Aorta (tissue), 5 donors: ENCODE measurements at regions of chr14 and their contacts with region 1.

Region 1: GRCh38 chr14:81269100-81269978 is 48.6 kb upstream of the GTF2A1 start:
- DNase-seq: no peak
- ATAC-seq: peak; percentile 84
- H3K4me3 ChIP-seq: no peak overlapping the region
- H3K27ac ChIP-seq: no peak overlapping the region
- H3K4me1 ChIP-seq: no peaks in the 10 kb centered on the region
- H3K27me3 ChIP-seq: no peaks in the 10 kb centered on the region

Region 2: GRCh38 chr14:81187832-81188522 is 81.4 kb before region 1 on chr14:
- intact Hi-C with region 1: no loop called
- DNase-seq: no peak
- ATAC-seq: no peak
- H3K4me3 ChIP-seq: no peak overlapping the region
- H3K27ac ChIP-seq: no peak overlapping the region
- H3K4me1 ChIP-seq: no peaks in the 10 kb centered on the region
- H3K27me3 ChIP-seq: no peaks in the 10 kb centered on the region

Region 3: DNA sequence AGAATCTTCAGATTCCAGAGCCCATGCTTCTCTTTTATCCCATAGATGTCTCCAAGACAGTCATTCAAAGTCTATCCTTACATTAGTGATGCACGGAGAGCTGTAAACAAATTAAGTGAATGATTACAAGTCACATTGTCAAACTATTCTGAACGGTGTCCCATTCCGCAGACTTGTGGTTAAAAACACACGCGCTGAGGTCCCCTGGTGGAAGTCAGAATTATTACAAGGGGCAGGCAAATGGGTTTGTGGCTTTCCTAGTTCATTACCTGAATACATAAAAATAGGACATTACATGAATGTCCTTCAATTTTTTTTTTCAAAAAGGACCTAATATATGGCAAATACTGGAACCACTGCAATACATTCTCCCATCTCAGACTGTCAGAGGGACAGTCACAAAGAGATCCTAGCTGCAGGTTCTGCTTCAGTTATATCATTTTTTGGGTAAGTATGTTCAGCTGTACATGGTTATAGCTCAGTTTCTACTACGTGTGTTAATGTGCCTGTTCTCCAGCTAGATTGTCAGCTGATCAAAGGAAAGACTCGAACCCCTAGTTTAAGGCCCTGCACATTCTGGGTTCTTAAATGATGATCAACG is 183.9 kb after region 1 on chr14:
- intact Hi-C with region 1: loop called (anchors 2 to 5 kb)
- DNase-seq: no peak
- ATAC-seq: peak; percentile 73
- H3K4me3 ChIP-seq: no peak overlapping the region
- H3K27ac ChIP-seq: no peak overlapping the region
- H3K4me1 ChIP-seq: peaks cover 0 to 4% of the 10 kb centered on the region in 2 donors
- H3K27me3 ChIP-seq: no peaks in the 10 kb centered on the region

Region 4: DNA sequence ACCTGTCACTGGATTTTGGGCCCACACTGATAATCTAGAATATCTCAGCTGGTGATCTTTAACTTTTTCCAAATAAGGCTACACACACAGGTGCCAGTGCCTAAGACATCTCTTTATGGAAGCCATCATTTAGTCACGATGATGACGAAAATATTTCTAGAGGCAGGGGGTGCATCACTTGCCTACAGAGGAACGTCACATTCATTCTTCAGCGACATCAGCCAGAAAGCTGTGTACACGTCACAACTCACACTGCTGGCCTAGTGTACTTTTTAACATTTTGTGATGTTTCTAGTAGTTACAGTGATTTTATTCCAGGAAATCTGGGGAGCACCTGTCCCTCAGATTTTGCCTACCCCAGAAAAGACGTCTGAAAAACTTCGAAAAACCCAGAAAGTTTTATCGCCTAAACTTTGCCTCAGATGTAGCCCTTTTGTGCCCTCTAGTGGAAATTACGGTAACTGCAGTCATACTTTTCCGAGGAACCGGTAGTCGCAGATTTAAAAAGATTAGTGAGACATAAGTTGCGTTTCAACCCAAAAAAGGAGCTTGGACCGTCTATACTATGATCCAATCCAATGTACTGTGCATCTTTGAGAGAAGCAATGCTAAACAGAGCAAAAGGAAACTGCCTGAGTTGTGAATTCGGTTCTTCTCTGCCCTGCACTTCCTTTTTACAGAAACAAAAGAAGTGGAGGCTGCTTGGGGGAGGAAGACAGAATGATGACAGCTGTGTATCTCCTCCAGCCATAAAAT is 195.1 kb after region 1 on chr14:
- intact Hi-C with region 1: loop called in 1 of 2 experiments (anchors 5 kb)
- DNase-seq: no peak
- ATAC-seq: peak; percentile 85
- H3K4me3 ChIP-seq: peak overlapping the region; percentile 63 to 77
- H3K27ac ChIP-seq: no peak overlapping the region
- H3K4me1 ChIP-seq: no peaks in the 10 kb centered on the region
- H3K27me3 ChIP-seq: no peaks in the 10 kb centered on the region